Panc1 (cell line): ENCODE measurements at regions of chr7 and their contacts with region 1.

Region 1: GRCh38 chr7:71308096-71308495 is 176.2 kb downstream of the GALNT17 start:
- DNase-seq: no peak
- ATAC-seq: no peak
- H3K4me3 ChIP-seq: no peak overlapping the region
- H3K27ac ChIP-seq: no peak overlapping the region
- H3K4me1 ChIP-seq: no peaks in the 10 kb centered on the region
- H3K27me3 ChIP-seq: no peaks in the 10 kb centered on the region
- CTCF ChIP-seq: no peak

Region 2: GRCh38 chr7:71364551-71364950 is 56.5 kb after region 1 on chr7:
- CTCF ChIA-PET with region 1: no interaction called
- POLR2A ChIA-PET with region 1: no interaction called
- in situ Hi-C with region 1: no loop called
- intact Hi-C with region 1: loop called (anchors 10 kb)
- DNase-seq: no peak
- ATAC-seq: no peak
- H3K4me3 ChIP-seq: no peak overlapping the region
- H3K27ac ChIP-seq: no peak overlapping the region
- H3K4me1 ChIP-seq: no peaks in the 10 kb centered on the region
- H3K27me3 ChIP-seq: no peaks in the 10 kb centered on the region
- CTCF ChIP-seq: no peak